ENCODE measurements at regions of chr3 and their contacts with region 1.

Region 1: GRCh38 chr3:9731206-9732079 is at the start of gene BRPF1:
- DNase-seq: peak; percentile 100
- H3K4me3 Mint-ChIP-seq: peak within 1 kb of the TSS; percentile 96
- H3K27ac Mint-ChIP-seq: peak within 1 kb of the TSS; percentile 89
- H3K4me1 Mint-ChIP-seq: peaks cover 69% of the 10 kb centered on the region
- H3K27me3 Mint-ChIP-seq: no peaks in the 10 kb centered on the region
- total RNA-seq, gene BRPF1: 38.9 to 41.9 TPM

Region 2: GRCh38 chr3:9352917-9353752 is 378.3 kb before region 1 on chr3:
- CTCF ChIA-PET with region 1: interaction called, 21 read pairs
- POLR2A ChIA-PET with region 1: interaction called, 4 read pairs
- DNase-seq: peak; percentile 72
- H3K4me3 Mint-ChIP-seq: no peak overlapping the region
- H3K27ac Mint-ChIP-seq: peak overlapping the region; percentile 28
- H3K4me1 Mint-ChIP-seq: peaks cover 32% of the 10 kb centered on the region
- H3K27me3 Mint-ChIP-seq: no peaks in the 10 kb centered on the region

Region 3: DNA sequence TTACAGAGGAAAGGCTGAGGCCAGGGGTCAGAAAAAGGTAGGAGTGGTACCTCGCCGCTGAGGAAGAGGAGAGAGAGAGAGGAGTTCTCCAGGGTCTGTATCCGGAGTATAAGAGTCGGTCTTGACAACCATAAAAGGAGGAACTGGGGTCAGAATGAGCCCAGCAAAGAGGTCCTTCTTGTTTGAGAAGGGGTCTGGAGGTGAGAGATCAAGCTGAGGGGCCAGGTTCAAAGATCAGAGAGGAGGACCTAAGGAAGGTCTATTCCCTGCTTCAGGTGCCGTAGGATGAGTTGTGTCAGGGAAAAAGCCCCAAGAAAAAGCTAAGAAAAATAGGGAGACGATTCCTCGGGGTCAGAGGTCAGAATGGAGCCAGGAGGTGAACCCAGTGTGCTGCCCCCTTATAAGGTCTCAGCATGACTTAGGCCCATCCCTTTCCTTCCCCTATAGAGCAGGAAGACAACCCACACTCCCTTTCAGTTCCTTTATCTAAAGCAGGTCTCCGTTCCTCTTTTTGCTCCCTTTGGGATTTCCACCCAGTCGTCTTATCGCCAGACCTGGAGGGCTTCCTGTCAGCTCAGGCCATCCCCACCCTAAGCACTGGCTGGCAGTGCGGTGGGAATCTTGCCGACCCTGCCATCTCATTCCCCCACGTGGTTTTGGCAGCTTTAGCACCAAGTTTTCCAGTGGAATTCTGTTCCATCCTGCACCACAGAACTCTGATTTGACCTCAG is 81.5 kb before region 1 on chr3:
- CTCF ChIA-PET with region 1: interaction called, 6 read pairs
- POLR2A ChIA-PET with region 1: interaction called, 13 read pairs
- DNase-seq: peak; percentile 21
- H3K4me3 Mint-ChIP-seq: peak overlapping the region; percentile 87
- H3K27ac Mint-ChIP-seq: peak overlapping the region; percentile 87
- H3K4me1 Mint-ChIP-seq: peaks cover 18% of the 10 kb centered on the region
- H3K27me3 Mint-ChIP-seq: no peaks in the 10 kb centered on the region

Region 4: DNA sequence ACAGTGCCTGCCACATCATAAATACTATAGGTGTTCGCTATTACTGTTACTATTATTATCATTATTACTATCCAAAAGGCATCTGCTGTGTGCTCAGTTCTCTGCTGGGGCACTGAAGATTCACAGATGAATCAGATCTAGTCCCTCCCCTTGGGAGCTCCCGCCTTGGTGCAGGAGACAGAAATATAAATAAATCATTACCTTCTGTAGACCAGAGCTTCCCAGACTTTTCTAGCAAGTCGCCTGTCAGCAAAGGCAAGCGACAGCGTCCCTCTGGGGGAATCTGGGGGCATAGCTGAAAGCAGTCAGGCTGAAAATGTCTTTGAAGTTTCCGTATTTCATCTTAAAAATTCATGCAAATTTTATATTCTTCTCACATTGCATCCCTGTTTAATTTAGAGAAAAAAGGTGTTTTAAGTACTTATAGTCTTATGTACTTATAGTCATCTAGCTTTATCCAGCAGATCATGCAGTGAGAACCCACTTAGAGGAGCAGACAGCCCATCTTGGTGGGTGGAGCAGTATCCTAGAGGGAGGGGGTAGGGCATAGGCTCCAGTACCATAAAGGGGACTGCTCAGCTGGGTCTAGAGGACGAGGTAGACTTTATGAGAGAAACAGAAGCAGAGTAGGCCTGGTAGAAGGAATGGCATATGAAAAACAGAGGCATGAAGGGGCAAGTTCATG is 10.3 kb before region 1 on chr3:
- CTCF ChIA-PET with region 1: interaction called, 19 read pairs
- POLR2A ChIA-PET with region 1: interaction called, 6 read pairs
- DNase-seq: no peak
- H3K4me3 Mint-ChIP-seq: no peak overlapping the region
- H3K27ac Mint-ChIP-seq: no peak overlapping the region
- H3K4me1 Mint-ChIP-seq: no peaks in the 10 kb centered on the region
- H3K27me3 Mint-ChIP-seq: peaks cover 14% of the 10 kb centered on the region

Region 5: GRCh38 chr3:9769426-9770275 is 38.2 kb after region 1 on chr3 and contains the start of gene CAMK1:
- CTCF ChIA-PET with region 1: interaction called, 10 read pairs
- POLR2A ChIA-PET with region 1: interaction called, 23 read pairs
- DNase-seq: peak; percentile 77
- H3K4me3 Mint-ChIP-seq: peak within 1 kb of the TSS; percentile 71
- H3K27ac Mint-ChIP-seq: peak within 1 kb of the TSS; percentile 54
- H3K4me1 Mint-ChIP-seq: peaks cover 40% of the 10 kb centered on the region
- H3K27me3 Mint-ChIP-seq: no peaks in the 10 kb centered on the region
- total RNA-seq, gene CAMK1: 18.5 to 20.2 TPM

Region 6: DNA sequence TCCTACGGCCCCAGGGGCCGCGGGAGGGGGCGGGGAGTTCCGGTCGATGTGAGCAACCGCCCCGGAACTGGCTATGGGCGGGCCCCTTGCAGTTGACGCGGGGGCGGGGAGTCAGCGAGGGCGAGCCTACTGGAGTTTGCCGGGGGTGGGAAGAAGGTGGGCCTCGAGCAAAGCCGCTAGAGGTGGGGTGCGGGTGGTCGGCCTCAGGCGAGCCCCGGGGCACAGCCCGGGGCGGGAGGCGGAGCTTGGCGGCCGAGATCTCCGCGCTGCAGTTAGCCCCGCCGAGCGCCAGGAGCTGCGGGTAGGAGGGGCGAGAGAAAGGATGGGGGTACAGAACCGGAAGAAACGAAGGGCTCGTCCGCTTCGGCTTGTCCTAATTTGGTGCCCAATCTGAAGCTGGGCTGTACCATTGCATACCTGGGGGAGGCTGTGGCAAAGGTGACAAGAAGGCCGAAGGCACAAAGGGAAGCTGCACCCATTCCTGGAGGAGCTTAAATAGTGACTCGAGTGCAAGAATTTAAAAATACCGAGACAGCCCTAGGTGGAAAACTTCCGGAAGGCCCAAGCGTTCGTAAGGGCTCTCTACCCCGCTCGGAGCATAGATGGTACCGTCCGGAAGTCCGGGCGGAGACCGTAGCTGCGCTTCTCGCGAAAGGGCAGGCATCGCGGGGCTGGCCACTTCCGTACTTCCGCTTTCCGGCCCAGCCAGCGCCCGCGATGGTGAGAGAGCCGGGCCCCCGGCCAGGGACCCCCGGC is 61.1 kb after region 1 on chr3 and contains the starts of genes ARPC4 and TADA3:
- CTCF ChIA-PET with region 1: interaction called, 5 read pairs
- POLR2A ChIA-PET with region 1: interaction called, 27 read pairs
- DNase-seq: peak; percentile 93
- H3K4me3 Mint-ChIP-seq: peak within 1 kb of the TSS; percentile 97
- H3K27ac Mint-ChIP-seq: peak within 1 kb of the TSS; percentile 99
- H3K4me1 Mint-ChIP-seq: peaks cover 63% of the 10 kb centered on the region
- H3K27me3 Mint-ChIP-seq: no peaks in the 10 kb centered on the region
- total RNA-seq, gene ARPC4: 255 to 266 TPM
- total RNA-seq, gene TADA3: 88.1 to 88.3 TPM

Measured in activated CD4-positive, alpha-beta memory T cell treated with anti-CD3 and anti-CD28 coated beads, Interleukin-2, amount 10 ng/mL, durations not matched to agents 7 days and 5 days (primary cell).